ENCODE measurements at regions of chr18 and their contacts with region 1.

Region 1: GRCh38 chr18:47930931-47931717 is 665 bp upstream of the SMAD2 start:
- DNase-seq: peak; percentile 98
- H3K4me3 Mint-ChIP-seq: peak overlapping the region; percentile 86
- H3K27ac Mint-ChIP-seq: peak overlapping the region; percentile 91
- H3K4me1 Mint-ChIP-seq: peaks cover 38% of the 10 kb centered on the region
- H3K27me3 Mint-ChIP-seq: peaks cover 11% of the 10 kb centered on the region

Region 2: DNA sequence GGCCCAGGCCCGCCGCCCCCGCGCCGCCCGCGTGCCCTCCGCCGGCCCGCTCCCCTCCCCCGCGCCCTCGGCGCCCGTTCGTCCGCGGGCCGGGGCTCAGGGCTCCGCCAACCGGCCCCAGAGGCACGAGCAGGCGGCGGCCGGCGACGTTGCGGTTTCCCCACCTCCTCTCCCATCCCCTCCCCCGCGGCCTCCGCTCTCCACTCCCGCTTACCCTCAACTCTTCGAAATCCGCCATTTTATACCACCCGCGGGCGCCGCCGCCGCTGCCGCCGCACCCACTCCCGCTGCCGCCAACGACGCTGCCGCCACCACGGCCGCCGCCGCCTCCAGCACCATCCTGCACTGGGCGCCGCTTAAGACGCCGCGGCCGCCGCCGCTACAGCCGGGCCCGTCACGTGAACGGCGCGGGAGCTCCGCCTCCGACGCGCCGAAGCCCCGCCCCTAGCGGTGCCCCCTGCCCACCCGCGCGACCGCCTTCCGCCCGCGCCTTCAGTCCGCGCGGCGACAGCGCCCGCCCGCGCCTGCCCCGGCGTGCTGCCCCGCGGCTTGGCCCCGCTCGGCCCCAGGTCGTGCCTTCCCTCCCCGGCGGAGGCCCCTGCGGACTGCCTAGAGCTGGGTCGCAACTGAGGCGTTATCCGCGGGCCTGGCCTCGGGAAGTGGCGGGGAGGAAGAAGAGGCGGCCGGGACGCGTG is 1013.9 kb before region 1 on chr18 and contains the starts of genes KATNAL2 and PIAS2:
- intact Hi-C with region 1: loop called (anchors 2 kb)
- DNase-seq: peak; percentile 93
- H3K4me3 Mint-ChIP-seq: peak within 1 kb of the TSS; percentile 93
- H3K27ac Mint-ChIP-seq: peak within 1 kb of the TSS; percentile 90
- H3K4me1 Mint-ChIP-seq: peaks cover 42% of the 10 kb centered on the region
- H3K27me3 Mint-ChIP-seq: peaks cover 13% of the 10 kb centered on the region
- total RNA-seq, gene KATNAL2: 0.40 TPM in 1 of 2 replicates, not detected in the other
- total RNA-seq, gene PIAS2: 33.9 and 39.3 TPM in 2 replicates

Region 3: DNA sequence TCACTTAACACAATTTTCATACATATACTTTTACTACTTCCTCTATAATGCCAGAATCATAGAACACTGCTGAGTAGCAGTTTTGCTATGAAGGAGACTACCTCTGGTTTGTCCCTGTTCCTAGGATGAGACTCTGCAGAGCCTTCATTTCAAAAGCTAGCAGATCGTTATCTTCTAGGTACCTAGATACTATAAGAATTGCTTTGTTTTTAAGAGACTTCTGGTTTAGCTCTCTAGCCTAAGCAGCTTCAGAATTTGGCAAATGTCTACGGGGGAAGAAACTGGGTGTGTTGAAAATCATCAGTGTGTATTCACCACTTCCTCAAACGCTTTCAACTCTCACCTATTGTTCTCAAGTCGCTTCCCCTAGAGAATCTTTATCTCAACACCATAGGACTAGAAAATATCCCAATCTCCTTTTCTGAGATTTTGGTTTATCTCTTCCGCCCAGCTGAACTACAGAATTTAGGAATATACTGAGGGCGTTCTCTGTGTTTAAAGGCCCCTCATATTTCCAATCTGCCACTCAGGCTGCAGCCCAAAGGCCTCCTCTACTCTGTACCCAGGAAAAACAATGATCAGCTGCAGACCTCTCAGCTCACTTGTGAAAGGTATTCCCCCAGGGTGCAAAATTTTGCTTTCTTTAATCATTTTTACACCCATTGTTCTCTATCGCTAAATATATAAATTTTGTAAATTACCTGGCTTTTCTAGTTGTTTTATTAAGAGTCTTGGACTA is 29.3 kb before region 1 on chr18:
- intact Hi-C with region 1: loop called (anchors 1 kb)
- DNase-seq: peak; percentile 82
- H3K4me3 Mint-ChIP-seq: peak overlapping the region; percentile 51
- H3K27ac Mint-ChIP-seq: peak overlapping the region; percentile 97
- H3K4me1 Mint-ChIP-seq: peaks cover 74% of the 10 kb centered on the region
- H3K27me3 Mint-ChIP-seq: no peaks in the 10 kb centered on the region

Region 4: GRCh38 chr18:47917923-47918610 is 13.1 kb before region 1 on chr18:
- intact Hi-C with region 1: loop called (anchors 1 kb)
- DNase-seq: peak; percentile 67
- H3K4me3 Mint-ChIP-seq: peak overlapping the region; percentile 77
- H3K27ac Mint-ChIP-seq: peak overlapping the region; percentile 95
- H3K4me1 Mint-ChIP-seq: peaks cover 75% of the 10 kb centered on the region
- H3K27me3 Mint-ChIP-seq: no peaks in the 10 kb centered on the region

Region 5: DNA sequence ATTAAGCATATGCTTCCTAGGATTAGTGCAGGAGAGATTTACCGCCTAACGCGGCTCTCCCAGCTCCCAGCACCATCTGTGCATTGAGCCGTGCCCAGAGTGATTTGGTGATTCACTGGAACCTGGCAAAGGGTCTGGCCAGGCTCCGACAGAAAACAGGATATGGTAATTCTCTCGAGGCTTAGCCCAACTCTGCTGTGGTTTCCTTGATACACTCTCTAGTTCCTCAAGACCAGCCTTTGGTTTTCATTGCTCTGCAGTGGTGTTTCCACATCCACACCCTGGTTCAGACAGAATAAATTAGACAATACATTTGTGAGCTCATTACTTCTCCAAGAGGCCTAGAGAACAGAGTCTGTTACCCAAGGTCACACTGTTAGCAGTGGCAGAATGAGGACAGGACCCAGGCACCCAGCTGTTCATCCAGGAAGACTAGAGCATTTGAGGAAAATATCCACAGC is 22.4 kb after region 1 on chr18:
- intact Hi-C with region 1: loop called (anchors 2 kb)
- DNase-seq: peak; percentile 80
- H3K4me3 Mint-ChIP-seq: peak overlapping the region; percentile 52
- H3K27ac Mint-ChIP-seq: peak overlapping the region; percentile 80
- H3K4me1 Mint-ChIP-seq: peaks cover 12% of the 10 kb centered on the region
- H3K27me3 Mint-ChIP-seq: peaks cover 28% of the 10 kb centered on the region

Region 6: GRCh38 chr18:48022531-48023329 is 91.6 kb after region 1 on chr18:
- intact Hi-C with region 1: loop called (anchors 2 kb)
- DNase-seq: peak; percentile 78
- H3K4me3 Mint-ChIP-seq: no peak overlapping the region
- H3K27ac Mint-ChIP-seq: no peak overlapping the region
- H3K4me1 Mint-ChIP-seq: peaks cover 7% of the 10 kb centered on the region
- H3K27me3 Mint-ChIP-seq: peaks cover 19% of the 10 kb centered on the region

Region 7: GRCh38 chr18:48470484-48471180 is 539.5 kb after region 1 on chr18:
- intact Hi-C with region 1: no loop called
- DNase-seq: no peak
- H3K4me3 Mint-ChIP-seq: no peak overlapping the region
- H3K27ac Mint-ChIP-seq: no peak overlapping the region
- H3K4me1 Mint-ChIP-seq: peaks cover 3% of the 10 kb centered on the region
- H3K27me3 Mint-ChIP-seq: peaks cover 27% of the 10 kb centered on the region